ENCODE measurements at regions of chr11 and their contacts with region 1.

Region 1: GRCh38 chr11:108435066-108435465 is 32.3 kb downstream of the C11orf65 start:
- DNase-seq: no peak
- H3K4me3 ChIP-seq: no peak overlapping the region
- H3K4me3 Mint-ChIP-seq: no peak overlapping the region
- H3K27ac Mint-ChIP-seq: no peak overlapping the region
- H3K4me1 ChIP-seq: no peaks in the 10 kb centered on the region
- H3K4me1 Mint-ChIP-seq: peaks cover 6% of the 10 kb centered on the region
- H3K27me3 ChIP-seq: no peaks in the 10 kb centered on the region
- H3K27me3 Mint-ChIP-seq: no peaks in the 10 kb centered on the region
- CTCF ChIP-seq: no peak

Region 2: GRCh38 chr11:108340970-108341369 is 94.1 kb before region 1 on chr11:
- CTCF ChIA-PET with region 1: no interaction called
- POLR2A ChIA-PET with region 1: no interaction called
- intact Hi-C with region 1: no loop called
- DNase-seq: peak; percentile 87 to 88
- H3K4me3 ChIP-seq: no peak overlapping the region
- H3K4me3 Mint-ChIP-seq: peak overlapping the region; percentile 4
- H3K27ac Mint-ChIP-seq: peak overlapping the region; percentile 1
- H3K4me1 ChIP-seq: peaks cover 19% of the 10 kb centered on the region
- H3K4me1 Mint-ChIP-seq: peaks cover 16% of the 10 kb centered on the region
- H3K27me3 ChIP-seq: no peaks in the 10 kb centered on the region
- H3K27me3 Mint-ChIP-seq: no peaks in the 10 kb centered on the region
- CTCF ChIP-seq: no peak

Region 3: GRCh38 chr11:108405706-108406105 is 29.4 kb before region 1 on chr11:
- CTCF ChIA-PET with region 1: no interaction called
- POLR2A ChIA-PET with region 1: no interaction called
- intact Hi-C with region 1: loop called (anchors 1 kb)
- DNase-seq: no peak
- H3K4me3 ChIP-seq: no peak overlapping the region
- H3K4me3 Mint-ChIP-seq: no peak overlapping the region
- H3K27ac Mint-ChIP-seq: no peak overlapping the region
- H3K4me1 ChIP-seq: peaks cover 9% of the 10 kb centered on the region; the same call in 1 of the 2 replicates
- H3K4me1 Mint-ChIP-seq: peaks cover 9% of the 10 kb centered on the region
- H3K27me3 ChIP-seq: no peaks in the 10 kb centered on the region
- H3K27me3 Mint-ChIP-seq: no peaks in the 10 kb centered on the region
- CTCF ChIP-seq: no peak

Region 4: GRCh38 chr11:108754901-108755632 is 320.0 kb after region 1 on chr11:
- CTCF ChIA-PET with region 1: no interaction called
- POLR2A ChIA-PET with region 1: no interaction called
- intact Hi-C with region 1: no loop called
- DNase-seq: no peak
- H3K4me3 ChIP-seq: no peak overlapping the region
- H3K4me3 Mint-ChIP-seq: no peak overlapping the region
- H3K27ac Mint-ChIP-seq: no peak overlapping the region
- H3K4me1 ChIP-seq: peaks cover 21% of the 10 kb centered on the region
- H3K4me1 Mint-ChIP-seq: peaks cover 15% of the 10 kb centered on the region
- H3K27me3 ChIP-seq: no peaks in the 10 kb centered on the region
- H3K27me3 Mint-ChIP-seq: no peaks in the 10 kb centered on the region
- CTCF ChIP-seq: no peak